ENCODE measurements at regions of chr2 and their contacts with region 1.

Region 1: GRCh38 chr2:147076634-147077033 is 768.2 kb upstream of the ACVR2A start:
- DNase-seq: no peak
- ATAC-seq: no peak
- H3K4me3 ChIP-seq: no peak overlapping the region
- H3K27ac ChIP-seq: no peak overlapping the region
- H3K4me1 ChIP-seq: no peaks in the 10 kb centered on the region
- H3K27me3 ChIP-seq: no peaks in the 10 kb centered on the region
- CTCF ChIP-seq: no peak
- EP300 ChIP-seq: no peak
- POLR2A ChIP-seq: no peak
- RAD21 ChIP-seq: no peak

Region 2: GRCh38 chr2:146964494-146964893 is 112.1 kb before region 1 on chr2:
- CTCF ChIA-PET with region 1: no interaction called
- POLR2A ChIA-PET with region 1: no interaction called
- in situ Hi-C with region 1: no loop called
- intact Hi-C with region 1: no loop called
- DNase-seq: no peak
- ATAC-seq: no peak
- H3K4me3 ChIP-seq: no peak overlapping the region
- H3K27ac ChIP-seq: no peak overlapping the region
- H3K4me1 ChIP-seq: no peaks in the 10 kb centered on the region
- H3K27me3 ChIP-seq: no peaks in the 10 kb centered on the region
- CTCF ChIP-seq: no peak
- EP300 ChIP-seq: no peak
- POLR2A ChIP-seq: no peak
- RAD21 ChIP-seq: no peak

Region 3: GRCh38 chr2:147125145-147125544 is 48.5 kb after region 1 on chr2:
- CTCF ChIA-PET with region 1: no interaction called
- POLR2A ChIA-PET with region 1: no interaction called
- in situ Hi-C with region 1: loop called (anchors 5 kb)
- intact Hi-C with region 1: no loop called
- DNase-seq: no peak
- ATAC-seq: no peak
- H3K4me3 ChIP-seq: no peak overlapping the region
- H3K27ac ChIP-seq: no peak overlapping the region
- H3K4me1 ChIP-seq: no peaks in the 10 kb centered on the region
- H3K27me3 ChIP-seq: no peaks in the 10 kb centered on the region
- CTCF ChIP-seq: no peak
- EP300 ChIP-seq: no peak
- POLR2A ChIP-seq: no peak
- RAD21 ChIP-seq: no peak